Naive thymus-derived CD4-positive, alpha-beta T cell (primary cell): ENCODE measurements at regions of chr4 and their contacts with region 1.

Region 1: GRCh38 chr4:142840516-142841123 is 5.5 kb downstream of the INPP4B start:
- DNase-seq: peak in 5 of 9 donors; percentile 20 to 46 (median 35)
- ATAC-seq: peak; percentile 37
- H3K4me3 ChIP-seq: no peak overlapping the region
- H3K4me3 Mint-ChIP-seq: no peak overlapping the region
- H3K27ac ChIP-seq: no peak overlapping the region
- H3K27ac Mint-ChIP-seq: no peak overlapping the region
- H3K4me1 ChIP-seq: peaks cover 0 to 5% of the 10 kb centered on the region in 2 donors
- H3K4me1 Mint-ChIP-seq: peaks cover 6 to 27% (median 18%) of the 10 kb centered on the region in 7 donors
- H3K27me3 ChIP-seq: no peaks in the 10 kb centered on the region
- H3K27me3 Mint-ChIP-seq: peaks cover 0 to 8% (median 0%) of the 10 kb centered on the region in 5 donors

Region 2: GRCh38 chr4:141540643-141541042 is 1300.0 kb before region 1 on chr4:
- CTCF ChIA-PET with region 1: no interaction called
- POLR2A ChIA-PET with region 1: no interaction called
- intact Hi-C with region 1: no loop called
- DNase-seq: no peak
- ATAC-seq: no peak
- H3K4me3 ChIP-seq: no peak overlapping the region
- H3K4me3 Mint-ChIP-seq: no peak overlapping the region
- H3K27ac ChIP-seq: no peak overlapping the region
- H3K27ac Mint-ChIP-seq: no peak overlapping the region
- H3K4me1 ChIP-seq: no peaks in the 10 kb centered on the region
- H3K4me1 Mint-ChIP-seq: no peaks in the 10 kb centered on the region
- H3K27me3 ChIP-seq: no peaks in the 10 kb centered on the region
- H3K27me3 Mint-ChIP-seq: peaks cover 0 to 5% (median 4%) of the 10 kb centered on the region in 5 donors

Region 3: GRCh38 chr4:142282870-142283431 is 557.7 kb before region 1 on chr4:
- CTCF ChIA-PET with region 1: interaction called, 4 read pairs
- POLR2A ChIA-PET with region 1: no interaction called
- intact Hi-C with region 1: loop called (anchors 1 kb)
- DNase-seq: peak in 7 of 9 donors; percentile 26 to 53 (median 38)
- ATAC-seq: peak; percentile 64
- H3K4me3 ChIP-seq: no peak overlapping the region
- H3K4me3 Mint-ChIP-seq: no peak overlapping the region
- H3K27ac ChIP-seq: no peak overlapping the region
- H3K27ac Mint-ChIP-seq: no peak overlapping the region
- H3K4me1 ChIP-seq: peaks cover 7 to 15% of the 10 kb centered on the region in 2 donors
- H3K4me1 Mint-ChIP-seq: peaks cover 9 to 35% (median 25%) of the 10 kb centered on the region in 7 donors
- H3K27me3 ChIP-seq: no peaks in the 10 kb centered on the region
- H3K27me3 Mint-ChIP-seq: no peaks in the 10 kb centered on the region